Sciatic nerve (tissue), 2 donors: ENCODE measurements at regions of chr19 and their contacts with region 1.

Region 1: GRCh38 chr19:28324275-28325060 is 888.5 kb downstream of the UQCRFS1 start:
- DNase-seq: no peak
- ATAC-seq: no peak

Region 2: GRCh38 chr19:27966390-27966816 is 358.1 kb before region 1 on chr19:
- intact Hi-C with region 1: loop called (anchors 10 kb)
- DNase-seq: no peak
- ATAC-seq: no peak

Region 3: DNA sequence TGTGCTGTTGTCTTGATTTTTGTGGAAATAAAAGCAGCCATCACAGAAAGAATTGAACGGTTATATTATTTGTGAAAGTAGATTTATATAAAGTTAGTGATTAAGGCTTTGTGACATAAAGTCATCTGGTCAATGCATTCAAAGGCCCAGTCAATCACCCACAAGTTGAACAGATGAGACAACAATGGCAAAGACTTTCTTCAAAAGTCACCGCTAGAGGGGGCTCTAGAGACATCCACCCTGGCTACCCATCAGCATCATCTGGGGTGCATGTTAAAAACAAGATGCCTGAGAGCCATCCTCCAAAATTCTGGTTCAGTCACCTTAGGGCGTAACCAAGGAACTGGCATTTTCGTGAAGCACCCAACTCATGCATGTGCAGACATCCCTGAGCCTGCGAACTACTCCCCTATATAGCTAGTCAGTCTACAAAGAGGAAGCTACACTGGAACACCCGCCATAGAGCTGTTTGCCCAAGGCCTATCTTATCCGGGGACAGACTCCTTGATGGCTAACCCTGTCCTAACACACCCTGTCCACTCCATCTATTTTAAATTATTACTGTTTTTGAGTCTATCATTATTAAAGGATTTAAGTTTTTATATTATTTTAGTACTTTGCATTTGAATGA is 82.1 kb before region 1 on chr19:
- intact Hi-C with region 1: loop called (anchors 5 kb)
- DNase-seq: no peak
- ATAC-seq: no peak